Transverse colon (tissue), 4 donors: ENCODE measurements at regions of chr12 and their contacts with region 1.

Region 1: GRCh38 chr12:76621582-76622024 is 62.0 kb upstream of the OSBPL8 start:
- DNase-seq: peak; percentile 82
- H3K4me3 ChIP-seq: no peak overlapping the region
- H3K27ac ChIP-seq: no peak overlapping the region
- H3K4me1 ChIP-seq: peaks cover 0 to 25% (median 7%) of the 10 kb centered on the region in 4 donors
- H3K27me3 ChIP-seq: no peaks in the 10 kb centered on the region
- CTCF ChIP-seq: peak; percentile 93 to 98 (median 97)
- EP300 ChIP-seq: no peak
- POLR2A ChIP-seq: no peak

Region 2: GRCh38 chr12:76784600-76785051 is 163.0 kb after region 1 on chr12:
- in situ Hi-C with region 1: loop called in 1 of 4 experiments (anchors 5 kb)
- intact Hi-C with region 1: no loop called
- DNase-seq: no peak
- H3K4me3 ChIP-seq: no peak overlapping the region
- H3K27ac ChIP-seq: peak overlapping the region; percentile 9 to 36 (median 22)
- H3K4me1 ChIP-seq: peaks cover 2 to 26% (median 19%) of the 10 kb centered on the region in 4 donors
- H3K27me3 ChIP-seq: no peaks in the 10 kb centered on the region
- CTCF ChIP-seq: no peak
- EP300 ChIP-seq: no peak
- POLR2A ChIP-seq: no peak

Region 3: DNA sequence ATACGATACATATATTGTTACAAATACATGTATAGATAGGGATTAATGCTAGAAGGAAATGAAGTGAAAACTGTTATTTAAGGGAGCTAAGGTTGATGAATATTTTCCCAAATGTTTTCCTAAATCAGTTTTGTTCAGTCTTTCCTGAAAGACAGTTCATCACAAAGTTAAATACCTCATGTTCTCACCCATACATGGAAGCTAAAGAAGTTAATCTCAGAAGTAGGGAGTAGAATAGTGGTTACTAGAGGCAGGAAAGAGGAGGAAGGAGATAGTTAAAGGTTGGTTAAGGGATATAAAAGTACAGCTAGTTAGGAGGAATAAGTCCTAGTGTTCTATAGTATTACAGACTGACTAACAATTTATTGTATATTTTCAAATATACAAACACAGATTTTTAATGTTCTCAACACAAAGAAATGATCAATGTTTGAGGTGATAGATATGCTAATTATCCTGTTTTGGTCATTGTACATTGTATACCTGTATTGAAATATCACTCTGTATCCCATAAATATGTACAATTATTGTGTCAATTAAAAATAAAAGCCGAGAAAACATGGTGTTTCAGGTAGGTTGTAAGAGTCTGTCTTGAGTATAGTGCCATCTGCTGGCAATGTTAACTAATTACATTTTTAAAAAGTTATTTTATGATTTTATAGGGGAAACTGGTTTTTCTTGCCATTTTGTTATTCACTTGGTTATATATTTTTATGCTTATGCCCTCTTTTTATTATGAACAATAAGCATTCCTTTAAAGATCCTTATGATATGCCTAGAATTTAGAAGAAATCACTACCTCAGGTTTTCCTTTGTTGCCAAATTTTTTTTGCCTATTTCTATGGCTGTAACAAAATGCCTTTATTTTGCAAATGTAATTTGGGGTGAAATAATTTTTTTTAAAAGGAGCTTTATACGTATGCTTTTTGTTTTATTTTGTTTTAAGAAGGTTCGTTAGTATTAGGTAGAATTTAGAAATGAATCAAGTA is 169.3 kb after region 1 on chr12:
- in situ Hi-C with region 1: loop called (anchors 5 to 10 kb)
- intact Hi-C with region 1: loop called (anchors 2 kb)
- DNase-seq: no peak
- H3K4me3 ChIP-seq: no peak overlapping the region
- H3K27ac ChIP-seq: no peak overlapping the region
- H3K4me1 ChIP-seq: peaks cover 0 to 18% (median 11%) of the 10 kb centered on the region in 4 donors
- H3K27me3 ChIP-seq: no peaks in the 10 kb centered on the region
- CTCF ChIP-seq: peak; percentile 64 to 78 (median 71)
- EP300 ChIP-seq: no peak
- POLR2A ChIP-seq: no peak

Region 4: DNA sequence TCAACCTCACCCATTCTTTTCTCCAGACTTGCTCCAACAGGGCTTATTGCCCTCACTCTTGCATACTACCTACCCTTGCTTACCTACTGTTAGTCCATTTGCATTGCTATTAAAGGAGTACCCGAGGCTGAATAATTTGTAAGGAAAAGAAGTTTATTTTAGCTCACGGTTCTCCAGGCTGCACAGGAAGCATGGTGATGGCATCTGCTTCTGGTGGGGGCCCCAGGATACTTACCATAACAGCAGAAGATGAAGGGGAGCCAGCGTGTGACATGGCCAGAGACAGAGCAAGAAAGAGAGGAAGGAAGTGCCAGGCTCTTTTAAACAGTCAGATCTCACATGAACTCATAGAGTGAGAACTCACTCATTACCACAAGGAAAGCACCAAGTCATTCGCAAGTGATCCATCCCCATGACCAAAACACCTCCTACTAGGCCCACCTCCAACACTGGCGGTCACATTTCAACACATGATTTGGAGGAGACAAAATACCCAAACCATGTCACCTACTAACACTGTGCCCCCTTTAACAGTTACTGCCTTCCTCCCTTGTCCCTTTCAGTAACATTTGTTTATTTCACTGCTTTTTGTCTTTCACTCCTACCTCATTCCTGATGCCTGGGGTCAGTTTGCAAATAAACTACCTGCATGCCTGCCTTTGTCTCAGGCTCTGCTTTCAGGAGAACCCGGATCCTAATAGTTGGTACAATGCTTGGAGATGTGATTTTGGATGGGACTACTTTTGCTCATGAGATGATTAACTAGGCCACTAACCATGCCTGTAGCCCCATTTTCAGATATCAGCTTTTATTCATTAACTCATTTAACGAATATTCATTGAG is 298.8 kb after region 1 on chr12:
- in situ Hi-C with region 1: loop called in 1 of 4 experiments (anchors 25 kb)
- intact Hi-C with region 1: no loop called
- DNase-seq: no peak
- H3K4me3 ChIP-seq: no peak overlapping the region
- H3K27ac ChIP-seq: no peak overlapping the region
- H3K4me1 ChIP-seq: no peaks in the 10 kb centered on the region
- H3K27me3 ChIP-seq: no peaks in the 10 kb centered on the region
- CTCF ChIP-seq: no peak
- EP300 ChIP-seq: no peak
- POLR2A ChIP-seq: no peak

Region 5: GRCh38 chr12:77010691-77011548 is 389.3 kb after region 1 on chr12:
- in situ Hi-C with region 1: loop called in 3 of 4 experiments (anchors 25 kb)
- intact Hi-C with region 1: loop called (anchors 2 kb)
- DNase-seq: peak; percentile 74
- H3K4me3 ChIP-seq: no peak overlapping the region
- H3K27ac ChIP-seq: no peak overlapping the region
- H3K4me1 ChIP-seq: peaks cover 0 to 6% (median 2%) of the 10 kb centered on the region in 4 donors
- H3K27me3 ChIP-seq: no peaks in the 10 kb centered on the region
- CTCF ChIP-seq: peak; percentile 69 to 94 (median 89)
- EP300 ChIP-seq: no peak
- POLR2A ChIP-seq: no peak